Activated naive CD4-positive, alpha-beta T cell treated with anti-CD3 and anti-CD28 coated beads for 36 hours (primary cell): ENCODE measurements at regions of chr3 and their contacts with region 1.

Region 1: GRCh38 chr3:112460519-112461195 is 38.6 kb downstream of the BTLA start:
- DNase-seq: no peak
- H3K4me3 Mint-ChIP-seq: no peak overlapping the region
- H3K27ac Mint-ChIP-seq: peak overlapping the region; percentile 79
- H3K4me1 Mint-ChIP-seq: peaks cover 60% of the 10 kb centered on the region
- H3K27me3 Mint-ChIP-seq: no peaks in the 10 kb centered on the region

Region 2: DNA sequence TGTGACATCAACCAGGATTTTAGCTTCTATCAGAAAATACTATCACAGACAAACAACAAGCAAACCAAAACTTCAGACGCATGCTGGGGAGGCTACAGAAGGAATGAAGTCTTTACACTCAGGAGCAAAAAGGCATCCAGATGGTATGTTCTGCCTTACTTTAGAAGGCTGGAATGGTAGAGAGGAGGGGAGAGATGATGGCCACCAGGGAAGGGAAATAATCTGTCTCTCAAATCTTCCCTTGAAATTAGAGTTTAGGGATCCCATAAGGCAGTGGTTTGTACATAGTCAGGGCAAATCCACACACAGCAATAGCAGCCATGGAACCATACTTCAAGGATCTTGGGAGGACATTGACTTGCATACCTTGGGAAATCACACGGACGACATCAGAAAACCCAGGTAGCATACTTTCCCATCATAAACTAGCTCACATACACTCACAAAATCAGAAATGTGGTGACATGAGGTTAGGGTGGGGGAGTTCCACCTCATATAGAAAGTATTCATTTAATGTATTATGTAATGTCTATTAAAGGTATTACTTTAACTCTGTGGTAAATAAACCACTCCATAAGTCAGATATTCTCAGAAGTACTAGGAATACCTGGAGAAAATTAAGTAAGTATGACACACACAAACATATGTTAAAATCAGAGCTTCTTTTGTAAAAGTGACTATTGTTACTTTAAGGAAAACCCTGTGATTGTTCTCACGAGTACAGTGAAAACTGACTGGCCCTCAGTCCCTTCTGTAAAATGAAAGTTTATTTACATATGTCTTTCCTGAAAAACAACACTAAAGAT is 29.2 kb after region 1 on chr3:
- CTCF ChIA-PET with region 1: interaction called, 3 read pairs
- intact Hi-C with region 1: loop called (anchors 1 kb)
- DNase-seq: peak; percentile 56
- H3K4me3 Mint-ChIP-seq: peak overlapping the region; percentile 100
- H3K27ac Mint-ChIP-seq: peak overlapping the region; percentile 100
- H3K4me1 Mint-ChIP-seq: peaks cover 81% of the 10 kb centered on the region
- H3K27me3 Mint-ChIP-seq: no peaks in the 10 kb centered on the region